Cardiac septum (tissue), 1 donor: ENCODE measurements at regions of chr6 and their contacts with region 1.

Region 1: DNA sequence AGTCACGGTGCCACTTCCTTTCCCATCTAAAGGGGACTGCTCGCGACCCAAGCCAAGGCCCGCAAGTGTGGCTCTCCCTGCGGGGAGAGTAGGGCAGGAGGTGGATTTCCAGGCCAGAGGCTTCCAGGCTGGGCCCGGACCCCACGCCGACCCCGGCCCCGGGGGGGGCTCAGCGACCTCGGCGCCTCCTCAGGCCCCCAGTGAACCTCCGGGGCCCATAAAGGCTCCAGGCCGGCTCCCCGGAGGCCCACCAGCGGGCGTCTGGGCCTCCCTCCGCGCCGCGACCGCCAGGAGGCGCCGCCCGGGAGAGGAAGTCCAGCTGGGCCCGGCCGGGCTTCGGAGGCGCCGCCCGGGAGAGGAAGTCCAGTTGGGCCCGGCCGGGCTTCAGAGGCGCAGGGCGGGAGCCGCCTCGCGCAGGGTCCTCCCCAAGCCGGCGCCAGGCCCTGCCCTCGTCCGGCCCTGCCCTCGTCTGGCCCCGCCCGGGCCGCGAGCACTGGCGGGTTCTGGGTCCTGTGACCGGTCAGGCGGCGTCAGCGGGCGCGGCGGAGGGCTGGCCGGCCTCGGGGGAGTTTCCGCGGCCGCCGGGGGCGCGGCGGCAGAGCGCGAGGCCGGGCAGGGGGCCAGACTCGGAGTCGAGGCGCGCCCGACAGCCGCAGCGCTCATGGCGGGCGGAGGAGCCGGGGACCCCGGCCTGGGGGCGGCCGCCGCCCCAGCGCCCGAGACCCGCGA is at the start of gene RAB32:
- DNase-seq: peak; percentile 97
- total RNA-seq, gene RAB32: 8.2 TPM

Region 2: GRCh38 chr6:145963216-145964068 is 579.9 kb before region 1 on chr6:
- intact Hi-C with region 1: loop called (anchors 2 kb)
- DNase-seq: peak; percentile 81

Region 3: DNA sequence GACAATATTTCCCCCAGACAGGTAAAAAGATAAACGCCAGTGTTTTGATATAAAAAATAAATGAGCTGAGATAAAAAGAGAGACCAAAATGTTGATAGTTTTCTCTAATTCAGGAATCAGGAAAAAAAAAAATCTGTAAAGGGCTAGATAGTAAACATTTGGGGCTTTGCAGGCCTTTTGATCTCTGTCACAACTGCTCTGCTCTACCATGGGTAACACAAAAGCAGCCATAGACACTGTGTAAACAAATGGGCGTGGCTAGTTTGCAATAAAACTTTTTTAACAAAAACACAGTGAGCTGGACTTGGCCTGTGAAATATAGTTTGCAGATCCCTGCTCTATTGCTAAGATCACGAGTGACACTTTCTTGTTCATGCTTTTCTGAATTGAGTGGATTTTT is 441.7 kb after region 1 on chr6:
- intact Hi-C with region 1: no loop called
- DNase-seq: no peak